BJ (cell line): ENCODE measurements at regions of chr2 and their contacts with region 1.

Region 1: DNA sequence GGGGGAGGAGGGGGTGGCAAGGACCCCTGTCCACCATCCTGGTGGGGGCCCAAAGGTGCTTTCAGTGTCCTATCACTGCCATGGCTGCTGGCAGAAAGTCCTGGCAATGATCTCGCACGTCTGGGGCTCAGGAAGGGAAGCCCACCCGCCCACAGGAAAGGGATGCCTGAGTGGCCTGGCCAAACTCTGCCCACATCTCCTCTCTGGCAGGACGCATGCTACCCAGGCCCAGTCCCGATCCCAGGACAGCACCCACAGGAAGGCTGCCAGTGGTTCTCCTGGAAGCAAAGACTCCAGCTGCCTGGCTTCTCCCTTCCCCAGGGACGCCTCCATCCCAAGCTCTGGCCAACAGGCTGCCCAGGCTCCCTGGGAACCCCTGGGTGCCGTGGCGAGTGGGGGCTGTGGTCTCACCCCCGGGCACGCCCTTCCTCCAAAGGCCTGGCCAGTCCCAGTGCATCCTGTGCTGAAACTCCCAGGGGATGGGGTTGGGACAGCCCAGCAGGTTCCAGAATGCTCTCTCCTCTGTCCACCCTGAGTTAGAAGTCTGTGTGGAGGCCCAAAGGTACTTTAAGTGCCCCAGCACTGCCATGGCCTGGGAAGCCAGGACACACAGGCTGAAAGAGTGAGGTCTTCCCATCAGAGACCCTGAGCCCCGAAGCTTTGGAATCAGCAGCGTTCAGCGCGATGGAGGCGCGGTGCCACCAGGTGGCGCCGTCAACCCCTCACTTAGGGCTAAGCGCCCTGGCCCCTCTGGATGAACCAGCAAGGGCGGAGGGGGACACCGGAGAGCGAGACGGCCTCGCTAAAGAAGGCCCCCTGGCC is 29.8 kb upstream of the TAF1B start:
- DNase-seq: no peak
- H3K4me3 ChIP-seq: no peak overlapping the region
- H3K27me3 ChIP-seq: no peaks in the 10 kb centered on the region
- CTCF ChIP-seq: peak; percentile 97

Region 2: GRCh38 chr2:9793156-9793917 is 20.2 kb before region 1 on chr2:
- CTCF ChIA-PET with region 1: no interaction called
- POLR2A ChIA-PET with region 1: no interaction called
- DNase-seq: no peak
- H3K4me3 ChIP-seq: no peak overlapping the region
- H3K27me3 ChIP-seq: peaks cover under 1% of the 10 kb centered on the region; the same call in 1 of the 2 replicates
- CTCF ChIP-seq: no peak

Region 3: DNA sequence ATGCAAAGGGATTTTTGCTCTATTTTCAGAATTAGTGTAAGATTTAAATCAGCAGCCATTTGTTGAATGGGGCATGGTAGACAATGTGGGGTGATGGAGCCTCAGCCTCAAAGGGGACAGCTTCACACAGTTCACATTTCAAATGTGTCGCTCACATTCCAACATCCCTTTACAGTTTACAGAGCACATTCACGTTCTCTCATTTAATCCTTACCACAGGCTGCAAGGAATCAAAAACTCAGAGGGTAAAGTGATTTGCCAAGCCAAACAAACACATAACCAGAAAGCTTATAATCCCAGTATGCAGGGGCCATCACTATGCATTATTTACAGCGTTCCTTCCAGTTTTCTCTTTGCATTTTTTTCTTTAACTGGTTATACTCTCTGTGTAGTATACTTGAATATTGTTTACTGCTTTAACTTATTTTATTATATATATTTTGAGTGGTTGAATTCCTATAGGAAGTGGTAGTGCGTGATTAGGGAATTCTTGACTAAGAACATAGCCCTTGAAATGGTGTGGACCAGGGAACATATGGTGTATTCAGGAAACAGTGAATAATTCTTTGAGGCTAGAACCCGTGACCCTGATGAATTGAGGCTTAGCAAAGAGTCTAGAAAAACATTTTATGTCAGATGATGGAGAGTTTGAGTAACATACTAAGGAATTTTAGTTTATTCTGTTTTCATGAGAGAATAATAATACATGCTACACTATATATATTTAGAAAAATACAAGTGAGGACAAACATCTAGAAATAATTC is 11.6 kb after region 1 on chr2:
- CTCF ChIA-PET with region 1: interaction called, 11 read pairs
- POLR2A ChIA-PET with region 1: no interaction called
- DNase-seq: no peak
- H3K4me3 ChIP-seq: no peak overlapping the region
- H3K27me3 ChIP-seq: no peaks in the 10 kb centered on the region
- CTCF ChIP-seq: no peak

Region 4: DNA sequence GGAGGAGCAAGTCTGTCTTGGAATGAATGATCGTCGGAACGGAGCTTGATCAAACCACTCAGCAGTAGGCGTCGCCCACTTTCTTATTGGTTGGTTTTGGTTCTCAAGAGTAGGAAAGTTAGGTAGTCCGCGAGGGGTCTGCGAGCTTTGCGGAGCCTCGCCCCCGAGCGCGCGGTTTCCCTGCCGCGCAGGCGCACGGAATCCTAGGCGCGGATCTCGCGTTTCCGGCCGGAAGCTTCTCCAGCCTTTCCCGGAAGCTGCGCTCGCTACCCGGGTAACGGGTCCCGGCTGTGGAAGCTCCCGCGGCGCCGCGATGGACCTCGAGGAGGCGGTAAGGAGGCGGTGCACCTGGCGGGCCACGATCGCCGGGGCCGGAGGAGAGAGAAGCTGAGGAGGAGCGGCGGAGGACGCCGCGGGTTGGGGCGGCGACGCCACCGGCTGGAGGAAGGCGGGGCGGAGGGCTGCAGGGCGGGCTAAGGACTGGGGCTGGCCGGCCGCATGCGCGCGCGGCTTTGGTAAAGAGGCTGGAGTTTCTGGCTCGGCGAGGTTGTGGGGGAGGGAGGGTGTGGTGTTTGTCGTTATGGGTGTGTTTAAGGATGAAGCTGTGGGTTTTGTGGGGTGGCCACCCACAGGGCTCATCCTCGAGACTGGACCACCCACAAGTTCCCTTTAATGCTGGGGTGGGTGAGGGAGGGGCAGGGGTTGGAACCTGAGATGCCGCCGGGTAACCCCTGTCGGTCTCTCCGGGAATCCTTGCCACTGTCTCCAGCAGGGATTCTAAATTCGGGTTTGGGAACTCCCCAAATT is 29.9 kb after region 1 on chr2 and contains the start of gene TAF1B:
- CTCF ChIA-PET with region 1: interaction called, 47 read pairs
- POLR2A ChIA-PET with region 1: interaction called, 3 read pairs
- DNase-seq: peak; percentile 58
- H3K4me3 ChIP-seq: peak within 1 kb of the TSS; percentile 55
- H3K27me3 ChIP-seq: no peaks in the 10 kb centered on the region
- CTCF ChIP-seq: peak; percentile 31
- polyA plus RNA-seq, gene TAF1B: 7.6 and 16.8 TPM in 2 replicates

Region 5: GRCh38 chr2:9909106-9909505 is 95.6 kb after region 1 on chr2:
- CTCF ChIA-PET with region 1: no interaction called
- POLR2A ChIA-PET with region 1: no interaction called
- DNase-seq: no peak
- H3K4me3 ChIP-seq: no peak overlapping the region
- H3K27me3 ChIP-seq: no peaks in the 10 kb centered on the region
- CTCF ChIP-seq: no peak

Region 6: GRCh38 chr2:9993488-9994165 is 180.1 kb after region 1 on chr2:
- CTCF ChIA-PET with region 1: interaction called, 21 read pairs
- POLR2A ChIA-PET with region 1: no interaction called
- DNase-seq: peak; percentile 59
- H3K4me3 ChIP-seq: no peak overlapping the region
- H3K27me3 ChIP-seq: no peaks in the 10 kb centered on the region
- CTCF ChIP-seq: peak; percentile 55